Activated CD4-positive, alpha-beta memory T cell treated with anti-CD3 and anti-CD28 coated beads for 36 hours (primary cell): ENCODE measurements at regions of chr17 and their contacts with region 1.

Region 1: DNA sequence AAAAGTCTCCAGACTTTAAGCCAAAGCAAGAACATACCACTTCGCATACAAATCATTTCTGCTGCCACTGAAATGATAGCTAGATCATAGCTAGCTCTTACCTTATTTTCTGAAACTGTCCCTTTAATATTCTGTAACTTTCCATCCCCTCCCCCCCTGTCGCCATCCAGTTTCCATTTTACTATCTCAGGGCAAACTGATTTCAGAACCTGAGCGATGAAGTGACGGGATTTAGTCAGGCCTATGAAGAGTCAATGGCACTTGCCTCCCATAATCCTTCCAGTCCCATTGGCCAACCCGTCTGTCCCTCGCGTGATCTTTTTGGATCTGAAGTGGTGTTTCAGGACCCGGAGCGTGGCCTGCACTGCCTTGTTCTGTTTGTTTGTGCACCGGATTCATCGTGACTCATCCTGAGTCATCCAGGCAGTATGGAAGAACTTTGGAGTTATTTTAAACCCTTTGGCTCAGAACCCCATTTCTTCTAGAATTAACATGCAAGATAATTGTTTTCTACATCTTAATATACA is 199.8 kb upstream of the CHMP6 start:
- DNase-seq: peak; percentile 86
- H3K4me3 Mint-ChIP-seq: peak overlapping the region; percentile 45
- H3K27ac Mint-ChIP-seq: peak overlapping the region; percentile 95
- H3K4me1 Mint-ChIP-seq: peaks cover 89% of the 10 kb centered on the region
- H3K27me3 Mint-ChIP-seq: no peaks in the 10 kb centered on the region

Region 2: DNA sequence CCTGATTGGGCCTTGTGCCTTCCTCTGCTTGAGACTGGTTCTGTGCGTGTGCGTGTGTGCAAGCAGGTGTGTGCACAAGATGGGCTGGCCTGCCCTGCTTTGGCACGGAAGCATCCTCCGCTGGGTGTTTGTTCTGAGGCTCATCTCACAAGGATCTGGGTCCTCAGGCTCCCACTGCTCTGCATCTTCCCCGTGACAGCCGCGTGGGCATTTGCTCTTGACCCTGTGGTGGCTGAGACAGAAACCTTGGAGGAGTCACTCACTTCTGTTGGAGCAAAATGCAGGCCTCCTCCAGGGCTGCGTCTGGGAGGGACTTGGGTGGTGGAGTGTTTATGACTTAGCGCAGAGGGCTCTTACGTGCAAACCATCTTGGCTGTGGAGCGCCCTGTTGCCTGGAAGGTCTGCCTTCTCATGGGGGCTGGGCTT is 128.0 kb before region 1 on chr17:
- CTCF ChIA-PET with region 1: no interaction called
- POLR2A ChIA-PET with region 1: no interaction called
- intact Hi-C with region 1: loop called (anchors 1 kb)
- DNase-seq: peak; percentile 62
- H3K4me3 Mint-ChIP-seq: no peak overlapping the region
- H3K27ac Mint-ChIP-seq: peak overlapping the region; percentile 60
- H3K4me1 Mint-ChIP-seq: peaks cover 58% of the 10 kb centered on the region
- H3K27me3 Mint-ChIP-seq: no peaks in the 10 kb centered on the region

Region 3: GRCh38 chr17:80761110-80761871 is 30.5 kb before region 1 on chr17:
- CTCF ChIA-PET with region 1: no interaction called
- POLR2A ChIA-PET with region 1: interaction called, 8 read pairs
- intact Hi-C with region 1: loop called (anchors 1 kb)
- DNase-seq: peak; percentile 86
- H3K4me3 Mint-ChIP-seq: peak overlapping the region; percentile 68
- H3K27ac Mint-ChIP-seq: peak overlapping the region; percentile 96
- H3K4me1 Mint-ChIP-seq: peaks cover 73% of the 10 kb centered on the region
- H3K27me3 Mint-ChIP-seq: no peaks in the 10 kb centered on the region

Region 4: GRCh38 chr17:80780381-80781198 is 11.2 kb before region 1 on chr17:
- CTCF ChIA-PET with region 1: interaction called, 13 read pairs
- POLR2A ChIA-PET with region 1: interaction called, 4 read pairs
- intact Hi-C with region 1: loop called (anchors 1 kb)
- DNase-seq: peak; percentile 83
- H3K4me3 Mint-ChIP-seq: peak overlapping the region; percentile 69
- H3K27ac Mint-ChIP-seq: peak overlapping the region; percentile 87
- H3K4me1 Mint-ChIP-seq: peaks cover 69% of the 10 kb centered on the region
- H3K27me3 Mint-ChIP-seq: no peaks in the 10 kb centered on the region

Region 5: DNA sequence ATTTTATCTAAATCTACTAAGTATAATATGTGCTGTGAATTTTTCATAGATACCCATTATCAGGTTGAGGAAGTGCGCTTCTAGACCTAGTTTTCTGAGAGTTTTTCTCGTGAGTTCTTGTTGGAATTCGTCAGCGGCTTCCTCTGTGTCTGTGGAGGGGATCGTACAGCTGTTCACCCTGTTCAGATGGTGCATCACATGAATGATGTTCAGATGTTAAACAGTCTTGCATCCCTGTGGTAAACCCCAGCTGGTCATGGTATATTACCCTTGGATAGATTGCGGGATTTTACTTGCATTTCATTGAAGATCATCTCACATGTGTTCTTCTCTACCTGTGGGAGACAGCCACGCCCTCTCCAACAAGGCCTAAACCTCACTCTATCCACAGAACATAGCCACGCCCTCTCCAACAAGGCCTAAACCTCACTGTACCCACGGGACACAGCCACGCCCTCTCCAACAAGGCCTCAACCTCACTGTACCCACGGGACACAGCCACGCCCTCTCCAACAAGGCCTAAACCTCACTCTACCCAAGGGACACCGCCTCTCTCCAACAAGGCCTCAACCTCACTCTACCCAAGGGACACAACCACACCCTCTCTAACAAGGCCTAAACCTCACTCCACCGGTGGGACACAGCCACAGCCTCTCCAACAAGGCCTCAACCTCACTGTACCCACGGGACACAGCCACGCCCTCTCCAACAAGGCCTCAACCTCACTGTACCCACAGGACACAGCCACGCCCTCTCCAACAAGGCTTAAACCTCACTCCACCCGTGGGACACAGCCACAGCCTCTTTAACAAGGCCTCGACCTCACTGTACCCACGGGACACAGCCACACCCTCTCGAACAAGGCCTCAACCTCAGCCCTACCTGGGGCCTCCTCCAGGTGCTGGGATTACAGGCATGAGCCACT is 19.6 kb after region 1 on chr17:
- CTCF ChIA-PET with region 1: no interaction called
- POLR2A ChIA-PET with region 1: no interaction called
- intact Hi-C with region 1: no loop called
- DNase-seq: peak; percentile 30
- H3K4me3 Mint-ChIP-seq: peak overlapping the region; percentile 45
- H3K27ac Mint-ChIP-seq: peak overlapping the region; percentile 97
- H3K4me1 Mint-ChIP-seq: peaks cover 36% of the 10 kb centered on the region
- H3K27me3 Mint-ChIP-seq: no peaks in the 10 kb centered on the region

Region 6: DNA sequence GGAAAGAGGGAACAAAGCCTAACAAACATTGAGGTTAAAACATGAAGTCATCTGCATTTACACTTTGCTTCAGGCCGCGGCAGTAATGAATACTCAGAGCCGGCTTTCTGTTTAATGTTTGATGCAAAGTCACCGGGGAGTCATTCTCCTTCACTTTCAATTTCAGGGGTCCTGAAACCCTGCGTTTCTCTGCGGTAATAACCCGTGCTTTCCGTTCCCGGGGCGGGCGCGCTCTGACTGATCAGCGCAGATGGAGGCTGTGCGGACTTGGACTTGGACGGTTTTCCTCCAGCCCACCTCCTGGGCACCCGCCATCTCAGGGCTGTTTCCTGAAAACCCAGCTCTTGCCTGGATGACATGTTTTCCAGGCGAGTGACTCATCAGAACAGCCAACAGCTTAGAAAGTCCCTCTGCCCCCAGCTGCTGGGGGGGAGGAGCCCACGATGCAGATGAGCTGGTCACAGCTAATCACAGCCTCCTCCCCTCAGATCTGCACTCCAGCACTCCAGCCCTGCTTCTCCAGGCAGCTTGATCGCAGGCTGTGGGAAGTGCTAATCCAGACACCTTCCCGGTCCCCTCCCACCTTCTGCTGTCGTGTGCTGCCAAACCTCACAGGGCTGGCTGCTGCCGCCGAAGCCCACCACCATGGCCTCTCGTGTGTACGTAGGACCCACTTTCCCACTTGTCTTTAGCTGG is 41.2 kb after region 1 on chr17:
- CTCF ChIA-PET with region 1: no interaction called
- POLR2A ChIA-PET with region 1: interaction called, 8 read pairs
- intact Hi-C with region 1: loop called (anchors 1 kb)
- DNase-seq: peak; percentile 92
- H3K4me3 Mint-ChIP-seq: peak overlapping the region; percentile 74
- H3K27ac Mint-ChIP-seq: peak overlapping the region; percentile 94
- H3K4me1 Mint-ChIP-seq: peaks cover 34% of the 10 kb centered on the region
- H3K27me3 Mint-ChIP-seq: no peaks in the 10 kb centered on the region

Region 7: DNA sequence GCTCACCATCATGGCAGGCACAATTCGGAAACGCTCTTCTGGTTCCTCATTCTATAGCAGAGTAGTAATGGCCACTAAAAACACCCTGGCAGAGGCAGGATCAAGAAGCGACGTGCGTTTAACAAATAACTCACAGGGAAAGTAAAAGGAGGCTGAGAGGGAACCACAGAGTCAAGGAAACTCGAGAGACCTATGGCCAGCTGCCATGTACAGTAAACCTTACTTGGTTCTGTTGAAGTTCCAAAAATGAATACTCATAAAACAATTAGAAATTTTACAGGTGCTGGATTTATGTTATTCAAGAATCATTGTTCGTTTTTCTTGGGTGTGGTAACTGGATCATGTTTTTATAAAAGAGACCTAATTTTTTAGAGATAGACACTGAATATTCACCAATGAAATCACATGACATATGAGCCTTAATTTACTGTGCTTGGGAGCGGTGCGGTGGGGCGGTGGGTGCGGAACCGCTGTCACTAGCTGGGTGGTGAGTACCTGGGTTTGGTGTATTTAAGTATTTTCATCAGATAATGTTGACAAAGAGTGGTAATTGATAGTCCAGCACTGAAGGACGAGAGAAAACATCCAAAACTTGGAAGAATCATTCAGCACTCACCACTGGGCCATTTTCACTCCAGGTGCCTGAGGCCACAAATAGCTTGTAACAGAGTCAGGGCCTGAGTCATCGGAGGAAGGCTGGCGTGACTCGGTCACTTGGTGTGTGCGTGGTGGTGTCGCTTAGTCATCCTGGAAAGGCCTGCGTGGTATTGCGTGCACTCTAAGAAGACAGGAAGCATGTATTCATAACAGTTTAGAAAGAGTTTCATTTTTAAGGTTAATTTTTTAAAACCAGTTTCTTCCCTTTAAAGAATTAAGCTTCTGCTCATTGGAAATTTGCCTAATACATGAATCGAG is 64.4 kb after region 1 on chr17:
- CTCF ChIA-PET with region 1: no interaction called
- POLR2A ChIA-PET with region 1: interaction called, 5 read pairs
- intact Hi-C with region 1: loop called (anchors 1 kb)
- DNase-seq: peak; percentile 96
- H3K4me3 Mint-ChIP-seq: peak overlapping the region; percentile 24
- H3K27ac Mint-ChIP-seq: peak overlapping the region; percentile 94
- H3K4me1 Mint-ChIP-seq: peaks cover 59% of the 10 kb centered on the region
- H3K27me3 Mint-ChIP-seq: no peaks in the 10 kb centered on the region

Region 8: DNA sequence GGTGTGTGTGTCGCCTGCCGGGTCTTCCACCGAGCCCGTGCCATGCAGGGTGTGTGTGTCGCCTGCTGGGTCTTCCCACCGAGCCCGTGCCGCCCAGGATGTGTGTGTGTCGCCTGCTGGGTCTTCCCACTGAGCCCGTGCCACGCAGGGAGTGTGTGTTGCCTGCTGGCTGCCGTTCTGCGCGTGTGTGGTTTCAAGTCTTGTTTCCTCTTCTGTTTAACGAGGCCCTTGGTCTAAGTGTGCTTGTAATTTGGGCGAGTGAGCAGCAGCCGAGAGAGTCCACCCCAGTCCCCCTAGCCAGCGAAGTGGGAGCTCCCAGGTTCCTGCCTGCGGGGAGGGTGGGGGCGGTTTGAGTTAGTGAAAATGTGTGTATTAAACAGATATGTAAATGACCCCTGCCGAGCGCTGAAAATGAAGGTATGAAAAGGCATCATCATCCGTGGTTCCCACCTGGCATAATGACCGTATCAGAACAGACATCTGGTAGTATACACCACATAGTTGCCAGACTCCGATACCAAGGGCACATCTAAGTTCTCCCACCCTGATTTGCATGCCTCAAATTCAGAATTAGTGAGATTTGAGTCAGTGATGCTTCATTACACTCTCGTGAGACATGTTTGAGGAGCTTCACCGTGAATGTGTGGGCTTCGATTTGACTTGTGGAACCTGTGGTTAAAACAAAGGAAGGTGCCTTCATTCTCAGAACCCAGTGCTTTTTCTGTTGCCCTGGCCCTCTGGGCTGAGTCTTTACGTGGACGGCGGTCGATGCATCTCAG is 85.3 kb after region 1 on chr17:
- CTCF ChIA-PET with region 1: no interaction called
- POLR2A ChIA-PET with region 1: interaction called, 5 read pairs
- intact Hi-C with region 1: loop called (anchors 5 kb)
- DNase-seq: peak; percentile 89
- H3K4me3 Mint-ChIP-seq: peak overlapping the region; percentile 70
- H3K27ac Mint-ChIP-seq: peak overlapping the region; percentile 98
- H3K4me1 Mint-ChIP-seq: peaks cover 49% of the 10 kb centered on the region
- H3K27me3 Mint-ChIP-seq: no peaks in the 10 kb centered on the region